ENCODE measurements at regions of chr2 and their contacts with region 1.

Region 1: GRCh38 chr2:197705121-197705911 is at the start of gene MARS2:
- DNase-seq: peak; percentile 89 to 95 (median 93)
- ATAC-seq: peak; percentile 92
- H3K4me3 ChIP-seq: peak within 1 kb of the TSS; percentile 93
- H3K4me3 Mint-ChIP-seq: peak within 1 kb of the TSS; percentile 78 to 96 (median 94)
- H3K27ac ChIP-seq: peak within 1 kb of the TSS; percentile 87
- H3K27ac Mint-ChIP-seq: peak within 1 kb of the TSS; percentile 88 to 99 (median 97)
- H3K4me1 ChIP-seq: peaks cover 29 to 32% of the 10 kb centered on the region in 2 donors
- H3K4me1 Mint-ChIP-seq: peaks cover 33 to 56% (median 48%) of the 10 kb centered on the region in 7 donors
- H3K27me3 ChIP-seq: no peaks in the 10 kb centered on the region
- H3K27me3 Mint-ChIP-seq: peaks cover 0 to 13% (median 7%) of the 10 kb centered on the region in 5 donors
- total RNA-seq, gene MARS2: 8.8 to 15.4 (median 13.6) TPM

Region 2: GRCh38 chr2:196239622-196240587 is 1465.4 kb before region 1 on chr2:
- CTCF ChIA-PET with region 1: no interaction called
- POLR2A ChIA-PET with region 1: no interaction called
- intact Hi-C with region 1: loop called in 1 of 2 experiments (anchors 10 kb)
- DNase-seq: peak; percentile 33 to 90 (median 83)
- ATAC-seq: peak; percentile 87
- H3K4me3 ChIP-seq: peak overlapping the region; percentile 36
- H3K4me3 Mint-ChIP-seq: peak overlapping the region; percentile 64 to 87 (median 76)
- H3K27ac ChIP-seq: peak overlapping the region; percentile 71
- H3K27ac Mint-ChIP-seq: peak overlapping the region; percentile 90 to 99 (median 97)
- H3K4me1 ChIP-seq: peaks cover 57 to 60% of the 10 kb centered on the region in 2 donors
- H3K4me1 Mint-ChIP-seq: peaks cover 55 to 90% (median 80%) of the 10 kb centered on the region in 7 donors
- H3K27me3 ChIP-seq: no peaks in the 10 kb centered on the region
- H3K27me3 Mint-ChIP-seq: no peaks in the 10 kb centered on the region

Region 3: GRCh38 chr2:196926562-196927375 is 778.5 kb before region 1 on chr2 and contains the start of gene PGAP1:
- CTCF ChIA-PET with region 1: no interaction called
- POLR2A ChIA-PET with region 1: no interaction called
- intact Hi-C with region 1: loop called (anchors 1 to 2 kb)
- DNase-seq: peak; percentile 66 to 95 (median 72)
- ATAC-seq: peak; percentile 89
- H3K4me3 ChIP-seq: peak within 1 kb of the TSS; percentile 91
- H3K4me3 Mint-ChIP-seq: peak within 1 kb of the TSS; percentile 85 to 100 (median 96)
- H3K27ac ChIP-seq: peak within 1 kb of the TSS; percentile 79
- H3K27ac Mint-ChIP-seq: peak within 1 kb of the TSS; percentile 90 to 97 (median 94)
- H3K4me1 ChIP-seq: peaks cover 4 to 6% of the 10 kb centered on the region in 2 donors
- H3K4me1 Mint-ChIP-seq: peaks cover 22 to 43% (median 39%) of the 10 kb centered on the region in 7 donors
- H3K27me3 ChIP-seq: no peaks in the 10 kb centered on the region
- H3K27me3 Mint-ChIP-seq: peaks cover 0 to 2% (median 0%) of the 10 kb centered on the region in 5 donors
- total RNA-seq, gene PGAP1: 6.0 to 48.4 (median 6.9) TPM

Region 4: GRCh38 chr2:197453161-197453914 is 252.0 kb before region 1 on chr2 and contains the start of gene COQ10B:
- CTCF ChIA-PET with region 1: no interaction called
- POLR2A ChIA-PET with region 1: interaction called, 5 read pairs
- intact Hi-C with region 1: loop called (anchors 1 kb)
- DNase-seq: peak; percentile 87 to 99 (median 98)
- ATAC-seq: peak; percentile 92
- H3K4me3 ChIP-seq: peak within 1 kb of the TSS; percentile 92
- H3K4me3 Mint-ChIP-seq: peak within 1 kb of the TSS; percentile 92 to 100 (median 99)
- H3K27ac ChIP-seq: peak within 1 kb of the TSS; percentile 96
- H3K27ac Mint-ChIP-seq: peak within 1 kb of the TSS; percentile 97 to 100 (median 100)
- H3K4me1 ChIP-seq: peaks cover 16% of the 10 kb centered on the region in 2 donors
- H3K4me1 Mint-ChIP-seq: peaks cover 25 to 56% (median 47%) of the 10 kb centered on the region in 7 donors
- H3K27me3 ChIP-seq: no peaks in the 10 kb centered on the region
- H3K27me3 Mint-ChIP-seq: peaks cover 0 to 2% (median 0%) of the 10 kb centered on the region in 5 donors
- total RNA-seq, gene COQ10B: 22.9 to 57.2 (median 30.5) TPM

Region 5: DNA sequence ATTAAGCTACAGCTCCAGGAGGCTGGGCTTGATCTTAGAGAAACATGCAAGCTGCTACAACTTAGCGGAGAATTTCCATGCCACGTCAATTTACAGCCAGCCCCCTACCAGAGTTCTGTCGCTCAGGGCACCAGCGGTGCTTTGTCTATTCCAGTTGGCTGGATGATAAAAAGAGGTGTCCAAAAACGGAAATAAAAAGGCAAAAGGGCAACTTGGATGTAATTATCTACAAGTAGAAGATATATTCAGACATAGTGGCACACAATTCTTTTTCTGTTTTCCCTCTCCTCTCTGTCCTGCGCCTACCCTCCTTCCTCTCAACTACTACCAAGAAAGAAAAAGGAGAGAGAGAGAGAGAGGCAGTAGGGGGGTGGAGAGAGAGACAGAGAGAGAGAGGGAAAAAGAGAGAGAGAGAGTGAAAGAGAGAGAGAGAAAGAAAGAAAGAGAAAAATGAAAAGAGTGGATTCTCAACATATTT is 29.6 kb before region 1 on chr2:
- CTCF ChIA-PET with region 1: no interaction called
- POLR2A ChIA-PET with region 1: no interaction called
- intact Hi-C with region 1: no loop called
- DNase-seq: no peak
- ATAC-seq: no peak
- H3K4me3 ChIP-seq: no peak overlapping the region
- H3K4me3 Mint-ChIP-seq: no peak overlapping the region
- H3K27ac ChIP-seq: no peak overlapping the region
- H3K27ac Mint-ChIP-seq: no peak overlapping the region
- H3K4me1 ChIP-seq: no peaks in the 10 kb centered on the region
- H3K4me1 Mint-ChIP-seq: no peaks in the 10 kb centered on the region
- H3K27me3 ChIP-seq: peaks cover 6% of the 10 kb centered on the region in 2 donors
- H3K27me3 Mint-ChIP-seq: peaks cover 9 to 33% (median 14%) of the 10 kb centered on the region in 5 donors

Region 6: DNA sequence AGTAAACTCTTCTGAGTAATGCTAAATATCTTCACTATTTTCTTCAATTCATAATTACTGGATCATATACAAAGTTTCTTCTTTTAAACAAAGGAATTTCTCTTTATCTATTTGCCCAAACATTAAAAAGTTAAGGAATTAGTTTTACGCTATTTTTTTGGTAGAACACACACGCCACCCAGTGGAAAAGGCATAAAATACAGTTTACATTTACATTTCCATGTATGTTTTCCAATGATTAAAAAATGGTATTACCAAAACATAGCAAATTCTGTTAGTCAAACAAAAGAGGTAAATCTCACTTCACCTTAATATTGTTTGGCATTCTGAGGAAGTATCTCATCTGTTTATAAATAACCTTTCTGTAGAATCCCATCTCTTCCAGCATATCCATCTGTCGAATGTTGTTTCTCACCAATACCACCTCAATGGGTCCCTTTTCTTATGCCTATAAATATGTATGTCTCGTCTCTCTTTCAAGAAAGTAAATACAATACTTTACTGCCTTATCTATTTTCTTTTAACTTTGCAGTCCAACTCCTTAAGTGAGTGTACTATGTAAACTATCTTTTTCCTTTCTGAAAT is 72.6 kb after region 1 on chr2:
- CTCF ChIA-PET with region 1: no interaction called
- POLR2A ChIA-PET with region 1: no interaction called
- intact Hi-C with region 1: loop called (anchors 1 kb)
- DNase-seq: peak in 5 of 9 donors; percentile 30 to 50 (median 37)
- ATAC-seq: no peak
- H3K4me3 ChIP-seq: no peak overlapping the region
- H3K4me3 Mint-ChIP-seq: no peak overlapping the region
- H3K27ac ChIP-seq: no peak overlapping the region
- H3K27ac Mint-ChIP-seq: no peak overlapping the region
- H3K4me1 ChIP-seq: no peaks in the 10 kb centered on the region
- H3K4me1 Mint-ChIP-seq: peaks cover 0 to 6% (median 0%) of the 10 kb centered on the region in 7 donors
- H3K27me3 ChIP-seq: no peaks in the 10 kb centered on the region
- H3K27me3 Mint-ChIP-seq: peaks cover 4 to 26% (median 9%) of the 10 kb centered on the region in 5 donors

Region 7: DNA sequence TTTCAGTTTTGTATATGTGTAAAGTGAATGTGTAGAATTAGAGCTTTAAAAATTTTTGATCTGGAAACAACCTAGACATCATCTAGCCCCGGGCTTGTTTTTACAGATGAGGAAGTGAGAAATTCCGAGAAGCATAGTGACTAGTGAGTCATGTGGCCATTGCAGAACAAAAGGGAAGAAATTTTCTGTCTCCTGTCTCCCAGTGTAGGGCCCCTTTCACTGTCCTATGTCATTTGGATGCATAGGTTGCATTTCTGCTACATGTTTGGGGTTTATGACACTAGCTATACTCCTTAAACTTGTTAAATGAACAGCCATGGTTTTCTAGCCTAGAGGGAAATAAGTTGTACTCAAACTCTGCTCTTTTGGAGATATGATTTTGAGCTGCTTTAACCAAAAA is 183.7 kb after region 1 on chr2:
- CTCF ChIA-PET with region 1: no interaction called
- POLR2A ChIA-PET with region 1: no interaction called
- intact Hi-C with region 1: loop called in 1 of 2 experiments (anchors 5 kb)
- DNase-seq: peak in 8 of 9 donors; percentile 31 to 77 (median 60)
- ATAC-seq: peak; percentile 90
- H3K4me3 ChIP-seq: no peak overlapping the region
- H3K4me3 Mint-ChIP-seq: peak overlapping the region; percentile 26 to 88 (median 72)
- H3K27ac ChIP-seq: peak overlapping the region; percentile 72
- H3K27ac Mint-ChIP-seq: peak overlapping the region; percentile 63 to 97 (median 89)
- H3K4me1 ChIP-seq: peaks cover 0 to 49% of the 10 kb centered on the region in 2 donors
- H3K4me1 Mint-ChIP-seq: peaks cover 27 to 90% (median 71%) of the 10 kb centered on the region in 7 donors
- H3K27me3 ChIP-seq: no peaks in the 10 kb centered on the region
- H3K27me3 Mint-ChIP-seq: no peaks in the 10 kb centered on the region

Region 8: DNA sequence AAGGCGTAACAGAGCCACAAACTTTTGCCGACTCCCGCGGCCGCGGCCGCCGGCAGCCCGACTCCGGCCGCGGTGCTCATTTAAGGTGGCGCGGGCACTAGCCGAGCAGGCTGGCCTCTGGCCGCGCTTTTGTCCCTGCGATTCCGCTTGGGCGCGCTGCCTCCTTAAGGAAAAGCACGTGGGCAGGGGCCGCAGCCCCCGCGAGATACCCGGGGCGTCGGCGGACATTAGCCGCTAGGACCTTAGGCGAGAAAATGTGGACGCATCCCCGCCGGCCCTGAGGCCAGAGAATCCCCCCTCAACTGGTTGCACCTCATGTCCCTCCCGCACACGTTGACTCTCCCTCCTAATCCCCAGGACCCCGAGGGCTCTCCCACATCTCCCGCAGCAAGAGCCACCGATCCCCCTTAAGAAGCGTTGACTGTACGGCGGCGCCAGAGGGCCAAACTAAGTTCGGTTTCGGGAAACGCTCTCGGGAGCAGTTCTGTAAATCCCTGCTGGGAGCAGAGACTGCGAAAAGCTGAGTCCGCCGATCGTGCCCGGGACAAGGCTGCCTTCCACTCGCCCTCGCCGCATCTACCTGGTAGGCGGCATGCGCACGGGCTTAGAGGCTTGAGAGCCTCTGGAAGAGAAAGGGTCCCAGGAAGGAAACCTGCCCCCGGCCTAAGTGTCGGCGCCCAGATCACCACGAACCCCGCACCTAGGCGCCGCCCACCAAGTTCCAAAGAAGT is 1754.1 kb after region 1 on chr2:
- CTCF ChIA-PET with region 1: interaction called, 4 read pairs
- POLR2A ChIA-PET with region 1: no interaction called
- intact Hi-C with region 1: loop called in 1 of 2 experiments (anchors 1 kb)
- DNase-seq: peak in 8 of 9 donors; percentile 36 to 64 (median 48)
- ATAC-seq: peak; percentile 54
- H3K4me3 ChIP-seq: peak overlapping the region; percentile 94
- H3K4me3 Mint-ChIP-seq: peak overlapping the region; percentile 93 to 98 (median 94)
- H3K27ac ChIP-seq: peak overlapping the region; percentile 32
- H3K27ac Mint-ChIP-seq: peak overlapping the region; percentile 5 to 86 (median 73)
- H3K4me1 ChIP-seq: peaks cover 10 to 30% of the 10 kb centered on the region in 2 donors
- H3K4me1 Mint-ChIP-seq: peaks cover 6 to 44% (median 31%) of the 10 kb centered on the region in 7 donors
- H3K27me3 ChIP-seq: peaks cover 12 to 56% of the 10 kb centered on the region in 2 donors
- H3K27me3 Mint-ChIP-seq: peaks cover 44 to 77% (median 48%) of the 10 kb centered on the region in 5 donors